ENCODE measurements at regions of chr11 and their contacts with region 1.

Region 1: GRCh38 chr11:119615003-119615881 is 113.8 kb downstream of the NECTIN1 start:
- DNase-seq: peak; percentile 48
- ATAC-seq: peak; percentile 92
- H3K4me3 ChIP-seq: no peak overlapping the region
- H3K27ac ChIP-seq: no peak overlapping the region
- H3K4me1 ChIP-seq: no peaks in the 10 kb centered on the region
- H3K27me3 ChIP-seq: peaks cover 0 to 2% of the 10 kb centered on the region in 2 experiments; a peak in 2 of 4 replicates
- CTCF ChIP-seq: no peak
- EP300 ChIP-seq: no peak; a peak in 1 of 4 replicates
- POLR2A ChIP-seq: no peak
- RAD21 ChIP-seq: no peak

Region 2: GRCh38 chr11:119481021-119481666 is 134.1 kb before region 1 on chr11:
- CTCF ChIA-PET with region 1: no interaction called
- POLR2A ChIA-PET with region 1: no interaction called
- RAD21 ChIA-PET with region 1: no interaction called
- SMC1A ChIA-PET with region 1: no interaction called
- in situ Hi-C with region 1: no loop called
- intact Hi-C with region 1: loop called (anchors 10 kb)
- DNase-seq: peak; percentile 31
- ATAC-seq: peak; percentile 89
- H3K4me3 ChIP-seq: no peak overlapping the region
- H3K27ac ChIP-seq: no peak overlapping the region
- H3K4me1 ChIP-seq: no peaks in the 10 kb centered on the region
- H3K27me3 ChIP-seq: no peaks in the 10 kb centered on the region; a peak in 1 of 4 replicates
- CTCF ChIP-seq: peak; percentile 91 to 99 (median 97)
- EP300 ChIP-seq: no peak
- POLR2A ChIP-seq: no peak
- RAD21 ChIP-seq: peak; percentile 93

Region 3: DNA sequence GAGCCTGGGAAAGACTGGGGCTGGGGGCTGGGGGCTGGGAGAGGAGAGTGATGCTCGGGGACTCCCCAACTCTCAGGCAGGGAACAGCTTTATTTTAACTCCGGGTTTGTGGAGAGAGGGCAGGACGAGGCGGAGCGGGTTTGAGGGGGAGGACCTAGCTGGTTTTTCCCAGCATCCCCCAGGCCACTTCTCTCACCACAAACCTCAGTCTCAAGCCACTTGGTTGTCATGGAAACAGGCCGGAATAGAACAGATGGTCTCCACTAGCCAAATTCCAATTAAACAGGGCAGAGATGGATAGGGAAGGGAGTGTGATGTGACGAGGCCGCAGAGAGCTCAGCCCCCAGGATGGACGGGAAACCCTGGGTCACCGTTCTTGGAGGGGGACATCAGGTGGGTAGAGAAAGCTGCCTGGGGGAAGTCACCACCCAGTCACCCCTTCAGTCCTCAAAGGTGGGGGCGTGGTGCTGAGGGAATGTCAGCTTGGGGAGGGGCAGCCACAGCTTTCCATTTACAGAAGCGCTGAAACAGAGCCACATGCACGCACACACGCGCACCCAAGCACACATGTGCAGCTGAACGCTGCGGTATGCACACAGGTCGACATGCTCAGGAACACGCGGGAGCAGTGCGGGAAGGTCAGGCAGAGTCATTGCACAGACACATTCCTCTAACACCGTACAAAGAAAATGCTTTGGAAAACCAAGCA is 94.5 kb after region 1 on chr11:
- CTCF ChIA-PET with region 1: no interaction called
- POLR2A ChIA-PET with region 1: no interaction called
- RAD21 ChIA-PET with region 1: no interaction called
- SMC1A ChIA-PET with region 1: no interaction called
- in situ Hi-C with region 1: no loop called
- intact Hi-C with region 1: no loop called
- DNase-seq: no peak
- ATAC-seq: peak; percentile 80
- H3K4me3 ChIP-seq: no peak overlapping the region
- H3K27ac ChIP-seq: no peak overlapping the region; the same call in 1 of the 2 replicates
- H3K4me1 ChIP-seq: peaks cover 8% of the 10 kb centered on the region
- H3K27me3 ChIP-seq: no peaks in the 10 kb centered on the region
- CTCF ChIP-seq: no peak
- EP300 ChIP-seq: no peak
- POLR2A ChIP-seq: no peak
- RAD21 ChIP-seq: no peak